ENCODE measurements at regions of chr5 and their contacts with region 1.

Region 1: DNA sequence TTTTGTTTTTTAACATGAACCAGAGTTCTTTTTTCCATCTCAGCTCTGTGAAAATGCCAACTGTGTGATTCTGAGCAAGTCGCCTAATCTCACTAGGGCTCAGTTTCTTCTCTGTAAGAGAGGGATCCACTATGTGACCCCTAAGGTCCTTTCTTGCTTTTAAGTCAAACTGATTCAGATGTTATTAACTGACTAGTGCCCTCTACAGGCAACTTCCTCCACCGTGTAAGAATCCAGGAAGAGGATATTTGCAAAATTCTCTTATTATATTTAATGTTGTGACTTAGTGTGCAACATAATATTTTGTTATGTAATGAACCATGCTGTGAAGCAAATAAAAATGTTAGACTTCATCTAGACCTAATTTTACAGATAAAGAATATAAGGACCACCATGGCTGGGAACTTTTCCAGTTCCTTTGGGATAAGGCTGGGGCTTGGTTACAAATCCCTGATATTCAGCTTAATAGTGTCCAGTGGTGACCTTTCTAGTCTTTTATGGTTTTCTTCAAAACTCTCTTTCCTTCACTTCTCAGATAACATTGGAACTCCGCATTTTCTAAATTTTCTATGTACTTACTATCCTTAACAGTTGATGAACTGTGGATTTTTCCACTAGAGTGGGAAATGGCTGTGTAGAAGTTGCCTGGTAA is 244.7 kb downstream of the PIK3R1 start:
- DNase-seq: peak; percentile 13 to 57
- H3K4me3 ChIP-seq: no peak overlapping the region
- H3K27ac ChIP-seq: no peak overlapping the region
- H3K4me1 ChIP-seq: peaks cover 36% of the 10 kb centered on the region
- H3K27me3 ChIP-seq: no peaks in the 10 kb centered on the region
- CTCF ChIP-seq: peak; percentile 77

Region 2: DNA sequence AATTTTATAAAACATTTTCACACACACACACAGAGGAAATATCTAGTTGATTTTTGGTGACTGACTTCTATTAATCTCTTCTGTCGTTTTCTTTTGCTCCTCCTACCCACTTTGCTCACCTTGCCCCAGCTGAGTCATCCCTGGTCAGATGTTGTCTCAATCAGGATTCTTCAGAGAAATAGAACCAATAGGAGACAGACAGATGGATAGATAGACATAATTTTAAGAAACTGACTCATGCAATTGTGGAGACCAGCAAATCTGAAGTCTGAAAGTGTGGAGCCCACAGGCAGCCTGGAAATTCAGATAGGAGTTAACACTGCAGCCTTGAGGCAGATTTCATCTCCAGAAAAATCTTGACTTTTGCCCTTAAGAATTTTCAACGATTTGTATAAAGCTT is 281.7 kb before region 1 on chr5:
- CTCF ChIA-PET with region 1: no interaction called
- POLR2A ChIA-PET with region 1: no interaction called
- intact Hi-C with region 1: no loop called
- DNase-seq: peak; percentile 33 to 55
- H3K4me3 ChIP-seq: no peak overlapping the region
- H3K27ac ChIP-seq: no peak overlapping the region
- H3K4me1 ChIP-seq: no peaks in the 10 kb centered on the region
- H3K27me3 ChIP-seq: no peaks in the 10 kb centered on the region
- CTCF ChIP-seq: no peak

Region 3: DNA sequence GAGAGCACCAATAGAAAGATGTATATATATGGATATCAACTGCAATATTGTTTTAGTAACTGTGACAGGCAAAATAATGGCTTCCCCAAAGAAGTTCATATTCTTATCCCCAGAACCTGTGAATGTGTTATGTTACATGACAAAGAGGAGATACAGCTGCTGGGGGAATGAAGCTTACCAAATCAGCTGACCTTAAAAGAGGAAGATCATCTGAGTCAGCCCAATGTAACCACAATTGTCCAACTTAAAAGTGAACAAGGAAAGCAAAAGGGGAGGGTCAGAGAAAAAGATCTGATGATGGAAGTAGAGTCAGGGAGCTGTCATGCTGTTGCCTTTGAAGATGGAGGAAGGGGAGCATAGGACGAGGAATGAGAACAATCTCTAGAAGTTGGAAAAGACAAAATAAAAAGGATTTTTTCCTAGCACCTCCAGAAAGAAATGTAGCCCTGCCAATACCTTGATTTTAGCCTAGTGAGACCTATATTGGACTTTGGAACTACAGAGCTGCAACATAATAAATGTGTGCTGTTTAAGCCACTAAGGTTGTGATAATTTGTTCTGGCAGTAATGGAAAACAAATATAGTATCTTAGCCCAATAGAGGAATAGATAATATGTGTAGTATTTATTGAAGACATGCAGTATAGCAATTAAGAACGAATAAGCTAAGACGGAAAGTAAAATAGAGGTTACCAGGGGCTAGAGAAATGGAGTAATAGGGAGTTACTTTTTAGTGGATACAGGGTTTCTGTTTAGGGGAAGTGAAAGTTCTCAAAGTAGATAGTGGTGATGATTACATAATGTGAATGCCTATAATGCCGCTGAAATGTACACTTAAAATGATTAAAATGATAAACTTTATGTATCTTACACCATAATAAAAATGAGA is 128.8 kb before region 1 on chr5:
- CTCF ChIA-PET with region 1: no interaction called
- POLR2A ChIA-PET with region 1: no interaction called
- intact Hi-C with region 1: loop called (anchors 2 kb)
- DNase-seq: no peak
- H3K4me3 ChIP-seq: no peak overlapping the region
- H3K27ac ChIP-seq: no peak overlapping the region
- H3K4me1 ChIP-seq: peaks cover 30% of the 10 kb centered on the region
- H3K27me3 ChIP-seq: no peaks in the 10 kb centered on the region
- CTCF ChIP-seq: no peak

Region 4: GRCh38 chr5:68433923-68434879 is 26.1 kb before region 1 on chr5:
- CTCF ChIA-PET with region 1: interaction called, 4 read pairs
- POLR2A ChIA-PET with region 1: no interaction called
- intact Hi-C with region 1: loop called (anchors 1 kb)
- DNase-seq: peak; percentile 96 to 98
- H3K4me3 ChIP-seq: no peak overlapping the region
- H3K27ac ChIP-seq: peak overlapping the region; percentile 76
- H3K4me1 ChIP-seq: peaks cover 32% of the 10 kb centered on the region
- H3K27me3 ChIP-seq: no peaks in the 10 kb centered on the region
- CTCF ChIP-seq: no peak

Region 5: GRCh38 chr5:68683632-68684036 is 223.4 kb after region 1 on chr5:
- CTCF ChIA-PET with region 1: no interaction called
- POLR2A ChIA-PET with region 1: no interaction called
- intact Hi-C with region 1: loop called (anchors 10 kb)
- DNase-seq: peak; percentile 77 to 97
- H3K4me3 ChIP-seq: no peak overlapping the region
- H3K27ac ChIP-seq: peak overlapping the region; percentile 42
- H3K4me1 ChIP-seq: peaks cover 31% of the 10 kb centered on the region
- H3K27me3 ChIP-seq: no peaks in the 10 kb centered on the region
- CTCF ChIP-seq: no peak

Measured in PC-9 (cell line).